Ascending aorta (tissue), 2 donors: ENCODE measurements at regions of chr17 and their contacts with region 1.

Region 1: GRCh38 chr17:28661635-28662537 is at the starts of genes SDF2 and SUPT6H:
- DNase-seq: peak; percentile 53 to 94
- H3K4me3 ChIP-seq: peak within 1 kb of the TSS; percentile 70 to 91
- H3K27ac ChIP-seq: peak within 1 kb of the TSS; percentile 84 to 98
- H3K4me1 ChIP-seq: peaks cover 16 to 26% of the 10 kb centered on the region in 2 donors
- H3K27me3 ChIP-seq: no peaks in the 10 kb centered on the region
- CTCF ChIP-seq: no peak
- total RNA-seq, gene SDF2: 51.9 TPM
- total RNA-seq, gene SUPT6H: 43.7 TPM

Region 2: DNA sequence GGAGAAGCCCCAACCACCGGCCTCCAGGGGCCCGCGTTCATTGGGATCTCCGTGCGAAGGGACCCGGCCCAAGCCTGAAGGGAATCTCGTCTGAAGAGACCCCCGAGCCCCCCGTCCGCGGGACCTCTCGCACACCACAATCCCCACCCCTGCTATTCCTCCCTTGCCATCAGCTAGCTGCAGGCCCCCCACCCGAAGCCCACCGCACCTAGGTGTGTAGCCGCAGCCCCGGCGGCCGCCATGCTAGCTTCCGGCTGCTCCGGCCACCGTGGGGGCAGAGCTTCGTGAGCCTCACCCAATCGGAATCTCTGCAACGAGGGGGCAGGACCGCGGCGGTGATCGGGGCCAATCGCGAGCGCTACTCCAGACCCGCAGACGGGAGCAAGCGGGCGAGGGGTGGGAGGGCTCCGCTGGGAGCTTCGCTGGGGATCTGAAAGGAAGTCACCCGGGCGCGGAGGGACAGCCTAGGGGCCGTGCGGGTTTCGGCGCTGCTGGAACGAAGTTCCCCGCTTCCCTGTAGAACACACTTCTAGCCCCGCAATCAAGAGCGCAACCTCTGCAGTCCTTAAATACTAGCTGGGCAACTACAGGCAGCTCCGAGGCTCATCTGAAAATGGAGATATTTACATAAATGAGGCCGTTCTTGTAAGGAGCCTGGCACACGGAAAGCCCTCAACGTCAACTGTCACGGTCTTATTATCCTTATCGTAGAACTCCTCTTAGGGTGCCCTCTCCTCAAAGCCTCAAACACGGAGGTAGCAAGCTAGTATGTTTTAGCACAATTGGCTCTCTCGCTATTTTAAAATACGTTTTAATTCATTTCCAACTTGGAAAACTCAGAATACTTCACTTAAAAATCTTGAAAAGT is 90.4 kb before region 1 on chr17 and contains the start of gene PIGS:
- intact Hi-C with region 1: loop called (anchors 2 kb)
- DNase-seq: peak; percentile 79 to 96
- H3K4me3 ChIP-seq: peak within 1 kb of the TSS; percentile 91 to 95
- H3K27ac ChIP-seq: peak within 1 kb of the TSS; percentile 75 to 85
- H3K4me1 ChIP-seq: peaks cover 0 to 23% of the 10 kb centered on the region in 2 donors
- H3K27me3 ChIP-seq: no peaks in the 10 kb centered on the region
- CTCF ChIP-seq: no peak
- total RNA-seq, gene PIGS: 44.6 TPM

Region 3: GRCh38 chr17:28644985-28645939 is 16.6 kb before region 1 on chr17 and contains the start of gene BLTP2:
- intact Hi-C with region 1: loop called (anchors 1 kb)
- DNase-seq: peak; percentile 81 to 97
- H3K4me3 ChIP-seq: peak within 1 kb of the TSS; percentile 91 to 95
- H3K27ac ChIP-seq: peak within 1 kb of the TSS; percentile 93 to 94
- H3K4me1 ChIP-seq: peaks cover 5 to 27% of the 10 kb centered on the region in 2 donors
- H3K27me3 ChIP-seq: no peaks in the 10 kb centered on the region
- CTCF ChIP-seq: no peak
- total RNA-seq, gene BLTP2: 104 TPM

Region 4: GRCh38 chr17:28710861-28711722 is 49.2 kb after region 1 on chr17:
- intact Hi-C with region 1: loop called (anchors 2 kb)
- DNase-seq: peak; percentile 56 to 94
- H3K4me3 ChIP-seq: peak overlapping the region; percentile 61 to 76
- H3K27ac ChIP-seq: peak overlapping the region; percentile 86 to 94
- H3K4me1 ChIP-seq: peaks cover 3 to 24% of the 10 kb centered on the region in 2 donors
- H3K27me3 ChIP-seq: no peaks in the 10 kb centered on the region
- CTCF ChIP-seq: no peak

Region 5: DNA sequence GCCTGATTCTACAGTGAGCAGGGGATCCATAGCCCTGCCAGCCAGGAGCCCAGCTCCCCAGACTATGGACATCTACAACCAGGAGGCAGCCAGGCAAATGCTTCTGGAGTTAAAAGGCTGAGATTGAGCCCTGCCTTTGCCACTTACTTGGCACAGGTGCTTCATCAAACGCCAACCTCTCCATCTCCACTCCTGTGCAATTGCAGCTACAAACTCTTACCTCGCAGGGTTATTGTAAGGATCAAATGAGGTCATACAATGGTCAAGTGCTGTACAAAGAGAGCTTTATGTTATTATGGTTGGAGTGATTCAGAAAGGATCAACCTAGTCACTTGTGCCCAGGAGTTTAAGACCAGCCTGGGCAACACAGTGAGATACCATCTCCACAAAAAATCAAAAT is 528.2 kb after region 1 on chr17:
- intact Hi-C with region 1: no loop called
- DNase-seq: no peak
- H3K4me3 ChIP-seq: no peak overlapping the region
- H3K27ac ChIP-seq: no peak overlapping the region
- H3K4me1 ChIP-seq: no peaks in the 10 kb centered on the region
- H3K27me3 ChIP-seq: no peaks in the 10 kb centered on the region
- CTCF ChIP-seq: no peak